ENCODE measurements at regions of chr2 and their contacts with region 1.

Region 1: DNA sequence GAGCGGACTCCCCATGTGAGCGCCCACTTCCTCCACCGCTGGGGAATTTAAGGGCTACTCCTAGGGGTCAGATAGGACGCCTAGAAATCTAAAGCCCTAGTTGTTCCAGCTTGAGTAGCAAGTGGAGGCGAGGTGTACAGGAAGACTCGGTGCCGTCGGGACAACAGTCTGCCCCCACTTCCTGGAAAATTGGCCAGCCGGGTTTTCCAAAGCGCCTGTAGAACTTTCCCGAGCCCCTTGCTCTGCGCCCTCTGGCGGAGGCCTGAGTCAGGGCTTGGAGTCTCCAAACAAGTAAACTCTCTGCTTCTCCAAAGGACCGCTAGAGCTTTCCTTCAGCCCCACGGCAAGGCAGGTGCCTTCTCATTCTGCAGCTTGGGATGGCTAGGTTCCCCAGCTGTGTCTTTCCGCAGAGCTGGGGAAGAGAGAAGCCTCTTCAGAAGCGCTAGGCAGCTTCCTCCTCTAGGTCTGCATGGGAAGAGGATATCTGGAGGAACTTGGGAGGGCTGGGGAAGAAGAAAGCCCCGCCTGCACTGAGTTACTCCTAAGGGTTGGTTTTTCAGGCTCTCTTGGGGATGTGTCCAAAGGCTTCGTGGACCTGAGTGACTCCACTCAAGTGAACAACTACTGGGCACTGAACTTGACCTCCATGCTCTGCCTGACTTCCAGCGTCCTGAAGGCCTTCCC is 688 bp downstream of the SPR start:
- DNase-seq: no peak
- H3K4me3 ChIP-seq: peak overlapping the region; percentile 67
- CTCF ChIP-seq: peak; percentile 90

Region 2: DNA sequence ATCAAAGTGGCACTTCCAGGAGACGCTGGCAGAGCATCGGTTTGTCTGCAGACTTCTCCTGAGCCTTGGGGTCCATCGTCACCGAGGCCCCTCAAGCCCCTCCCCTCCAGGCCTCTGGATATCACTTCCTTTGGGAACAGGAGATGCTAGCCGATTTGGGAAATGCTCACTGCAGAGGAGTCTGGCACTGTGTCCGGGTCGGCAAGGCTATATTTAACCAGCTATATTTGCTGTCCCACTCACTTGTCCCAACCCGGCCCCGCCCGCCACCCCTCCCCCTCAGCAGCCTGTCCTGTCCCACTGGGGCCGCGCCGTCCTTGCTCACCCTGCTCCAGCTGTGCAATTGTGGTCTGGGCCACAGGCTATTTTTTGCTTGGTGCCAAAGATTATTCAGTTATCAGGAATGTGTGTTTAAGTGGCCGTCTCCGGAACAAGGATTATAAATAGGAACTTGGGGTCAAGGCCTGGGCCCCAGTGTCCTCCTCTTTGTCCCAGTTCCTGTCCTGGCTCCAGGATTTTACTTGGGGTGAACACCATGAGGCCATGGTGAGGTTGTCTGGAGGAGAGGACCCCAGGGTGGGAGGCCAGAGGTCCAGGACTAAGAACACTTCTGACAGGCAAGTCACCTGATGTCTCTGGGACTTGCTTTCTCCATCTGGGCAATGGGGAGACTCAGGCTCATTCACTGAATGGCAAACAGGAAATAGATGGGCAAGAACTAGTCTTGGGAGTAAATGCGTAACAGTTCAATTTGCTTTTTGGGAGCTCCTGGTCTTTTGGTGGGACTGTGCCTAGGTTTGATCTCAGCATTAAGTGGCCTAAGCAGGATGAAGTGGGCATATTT is 1170.9 kb before region 1 on chr2:
- CTCF ChIA-PET with region 1: no interaction called
- POLR2A ChIA-PET with region 1: no interaction called
- DNase-seq: peak; percentile 26
- H3K4me3 ChIP-seq: no peak overlapping the region
- CTCF ChIP-seq: no peak

Region 3: GRCh38 chr2:72770879-72771461 is 116.9 kb before region 1 on chr2:
- CTCF ChIA-PET with region 1: interaction called, 28 read pairs
- POLR2A ChIA-PET with region 1: no interaction called
- DNase-seq: no peak
- H3K4me3 ChIP-seq: no peak overlapping the region
- CTCF ChIP-seq: peak; percentile 63

Region 4: DNA sequence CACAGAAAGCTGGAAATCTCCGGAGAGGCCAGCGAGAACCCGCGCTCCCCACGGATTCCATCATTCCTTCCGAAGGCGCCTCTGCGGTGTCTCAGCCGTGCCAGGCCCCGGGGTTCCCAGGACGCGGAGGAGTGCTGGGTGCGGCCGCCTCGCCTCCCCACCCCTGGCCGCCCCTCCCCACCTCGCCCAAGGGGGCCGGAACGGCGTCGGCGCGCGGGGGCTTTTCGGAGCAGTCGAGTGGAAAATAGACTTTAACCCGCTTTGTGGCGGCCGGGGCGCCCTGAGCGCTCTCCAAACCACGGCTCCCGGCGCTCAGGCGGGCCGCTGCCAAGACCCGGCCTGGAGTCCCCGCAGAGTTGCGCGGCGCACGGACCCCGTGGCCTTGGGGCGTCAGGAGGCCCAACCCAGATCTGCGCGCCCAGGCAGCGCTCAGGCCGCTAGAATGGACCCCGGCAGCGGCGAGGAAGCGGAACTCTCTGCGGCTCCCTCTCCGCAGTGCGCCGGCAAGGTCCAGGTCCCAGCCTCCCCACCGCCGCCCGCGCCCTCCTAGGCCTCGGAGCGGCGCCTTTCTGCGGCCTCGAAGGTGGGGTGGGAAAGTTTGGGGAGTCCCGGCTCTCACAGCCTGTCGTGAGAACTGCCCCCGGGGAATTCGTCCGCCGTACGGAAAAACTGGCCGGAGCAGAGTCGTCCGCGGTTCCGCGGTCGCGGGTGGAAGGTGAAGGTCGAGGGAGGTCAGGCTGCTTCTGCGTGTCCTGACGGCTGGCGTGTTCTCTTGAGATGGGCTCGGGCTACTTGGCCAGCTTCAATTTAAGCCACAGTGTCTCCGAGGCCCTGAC is 28.2 kb after region 1 on chr2:
- CTCF ChIA-PET with region 1: interaction called, 48 read pairs
- POLR2A ChIA-PET with region 1: no interaction called
- DNase-seq: no peak
- H3K4me3 ChIP-seq: no peak overlapping the region
- CTCF ChIP-seq: no peak

Region 5: DNA sequence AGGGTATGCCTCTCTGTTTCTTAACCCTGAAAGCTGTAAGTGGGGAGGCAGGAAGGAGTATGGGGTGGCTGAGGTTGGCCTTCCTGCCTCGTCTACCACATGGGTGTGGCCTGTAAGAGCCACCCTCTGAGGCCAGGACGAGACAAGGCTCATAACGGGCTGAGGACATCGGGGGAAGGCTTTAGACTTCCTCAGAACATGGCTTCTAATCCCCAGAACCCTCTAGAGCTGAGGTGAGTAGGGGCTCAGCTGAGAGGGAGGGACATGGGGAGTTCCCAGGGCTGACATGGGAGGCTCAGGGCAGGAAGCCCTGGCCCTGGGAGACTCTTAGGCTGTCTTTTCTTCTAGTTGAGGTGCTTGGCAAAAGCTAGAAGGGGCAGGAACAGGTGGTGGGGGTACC is 66.1 kb after region 1 on chr2:
- CTCF ChIA-PET with region 1: interaction called, 60 read pairs
- POLR2A ChIA-PET with region 1: no interaction called
- DNase-seq: no peak
- H3K4me3 ChIP-seq: no peak overlapping the region
- CTCF ChIP-seq: no peak

Region 6: DNA sequence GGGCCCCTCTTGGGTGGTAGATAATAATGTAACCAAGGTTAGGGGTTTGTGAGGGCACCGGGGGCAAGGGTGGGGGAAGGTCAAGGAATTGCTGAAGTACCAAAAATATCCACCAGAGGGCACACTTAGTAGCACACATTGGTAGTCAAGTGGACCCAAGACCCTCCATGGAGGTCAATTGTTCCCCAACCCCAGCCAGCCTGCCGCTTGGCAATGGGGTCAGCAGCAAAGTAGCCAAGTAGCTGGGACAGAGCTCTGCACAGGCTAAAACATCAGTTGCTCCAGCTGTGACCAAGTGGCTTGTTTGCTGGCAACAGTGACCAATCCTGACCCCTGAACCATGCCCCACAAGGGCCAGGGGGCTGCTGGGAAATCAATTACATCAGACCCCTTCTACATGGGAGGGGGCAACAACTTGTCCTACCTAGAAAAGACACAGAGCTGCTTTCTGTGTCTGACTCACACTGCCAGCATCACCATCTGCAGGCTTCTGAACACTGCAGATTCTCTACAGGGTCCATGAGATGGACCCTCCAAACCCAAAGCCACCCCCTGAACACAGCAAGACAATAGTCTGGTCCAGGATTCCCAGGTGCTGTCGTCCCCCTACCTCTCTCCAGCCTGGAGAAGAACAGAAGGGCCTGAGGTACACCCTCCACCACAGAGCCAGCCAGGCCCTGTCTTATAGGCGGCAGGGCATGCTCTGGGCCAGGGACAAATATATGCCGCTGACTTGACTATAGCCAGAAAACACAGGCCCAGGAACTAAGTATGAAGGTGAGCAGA is 105.4 kb after region 1 on chr2:
- CTCF ChIA-PET with region 1: interaction called, 502 read pairs
- POLR2A ChIA-PET with region 1: no interaction called
- DNase-seq: no peak
- H3K4me3 ChIP-seq: no peak overlapping the region
- CTCF ChIP-seq: peak; percentile 66

Region 7: GRCh38 chr2:73071360-73072133 is 183.7 kb after region 1 on chr2 and contains the start of gene SFXN5:
- CTCF ChIA-PET with region 1: interaction called, 14 read pairs
- POLR2A ChIA-PET with region 1: no interaction called
- DNase-seq: peak; percentile 69
- H3K4me3 ChIP-seq: peak within 1 kb of the TSS; percentile 84
- CTCF ChIP-seq: peak; percentile 16

Region 8: DNA sequence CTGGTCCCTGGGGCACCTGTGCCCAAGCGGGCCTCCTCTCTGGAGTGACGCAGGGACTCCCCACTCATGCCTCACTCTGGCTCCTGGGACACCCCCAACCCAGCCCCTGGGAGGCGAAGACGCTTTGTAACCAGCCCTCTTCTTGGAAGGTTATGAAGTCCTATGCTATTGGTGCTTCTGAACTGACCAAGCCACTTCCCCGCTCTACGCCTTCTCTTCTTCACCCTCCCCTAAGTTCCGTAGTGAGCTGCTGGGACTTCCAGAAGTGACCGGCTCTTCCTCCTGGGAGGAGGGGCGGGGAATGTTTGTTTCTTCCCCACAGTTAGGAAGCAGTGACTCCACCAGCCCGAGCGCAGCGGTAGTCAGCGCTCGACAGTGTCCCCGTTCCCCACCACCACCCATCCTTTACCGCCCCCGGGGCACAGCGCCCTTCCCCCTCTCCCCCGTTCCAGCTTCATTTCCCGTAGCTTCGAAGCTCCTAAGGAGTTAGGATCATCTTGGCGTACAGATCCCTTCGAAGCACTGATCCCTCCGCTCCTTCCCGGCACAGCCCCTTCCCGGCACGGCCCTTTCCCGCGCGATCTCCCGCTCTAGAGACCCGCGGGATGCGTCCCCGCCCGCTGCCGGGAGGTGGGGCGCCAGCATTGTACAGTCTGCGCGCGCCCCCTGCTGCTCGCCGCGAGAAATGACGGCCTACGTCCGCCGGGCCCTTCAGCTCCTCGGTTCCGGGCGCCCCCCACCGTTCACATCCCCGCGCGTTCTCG is 289.2 kb after region 1 on chr2:
- CTCF ChIA-PET with region 1: interaction called, 292 read pairs
- POLR2A ChIA-PET with region 1: interaction called, 8 read pairs
- DNase-seq: no peak
- H3K4me3 ChIP-seq: peak overlapping the region; percentile 71
- CTCF ChIP-seq: peak; percentile 100

Measured in AG04449 (cell line).